Activated CD8-positive, alpha-beta T cell treated with anti-CD3 and anti-CD28 coated beads, Interleukin-2, amount 10 ng/mL, durations not matched to agents 7 days and 5 days (primary cell): ENCODE measurements at regions of chr6 and their contacts with region 1.

Region 1: DNA sequence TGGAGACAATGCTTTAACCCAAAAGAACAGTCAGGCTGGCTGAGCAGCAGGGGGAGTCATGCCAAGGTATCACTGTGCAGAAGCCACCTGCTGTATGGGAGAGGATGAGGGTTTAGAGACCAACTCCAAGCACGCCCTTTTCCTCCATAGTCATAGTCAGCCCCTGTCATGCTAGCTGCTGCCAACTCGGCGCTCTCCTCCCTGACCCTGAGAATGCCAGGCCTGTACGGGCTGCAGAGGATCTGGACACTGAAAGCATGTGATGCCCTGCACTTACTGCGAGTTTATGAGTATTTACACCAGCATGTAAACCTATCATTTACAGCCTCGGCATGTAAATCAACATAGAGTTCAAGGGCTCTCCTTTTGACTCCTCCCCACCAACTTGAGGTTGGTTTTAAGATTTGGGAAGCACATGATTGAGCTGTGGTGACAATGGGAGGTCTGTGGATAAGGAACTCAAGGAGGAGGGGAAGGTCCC is 11.7 kb upstream of the SCUBE3 start:
- DNase-seq: no peak
- ATAC-seq: no peak
- H3K4me3 Mint-ChIP-seq: no peak overlapping the region
- H3K27ac Mint-ChIP-seq: no peak overlapping the region
- H3K4me1 Mint-ChIP-seq: no peaks in the 10 kb centered on the region
- H3K27me3 Mint-ChIP-seq: peaks cover 43% of the 10 kb centered on the region

Region 2: GRCh38 chr6:34986845-34987246 is 215.3 kb before region 1 on chr6:
- CTCF ChIA-PET with region 1: interaction called, 53 read pairs
- POLR2A ChIA-PET with region 1: no interaction called
- DNase-seq: peak; percentile 77
- ATAC-seq: peak; percentile 55
- H3K4me3 Mint-ChIP-seq: no peak overlapping the region
- H3K27ac Mint-ChIP-seq: no peak overlapping the region
- H3K4me1 Mint-ChIP-seq: no peaks in the 10 kb centered on the region
- H3K27me3 Mint-ChIP-seq: no peaks in the 10 kb centered on the region

Region 3: GRCh38 chr6:35146453-35146852 is 55.7 kb before region 1 on chr6:
- CTCF ChIA-PET with region 1: interaction called, 77 read pairs
- POLR2A ChIA-PET with region 1: no interaction called
- DNase-seq: peak; percentile 48
- ATAC-seq: peak; percentile 44
- H3K4me3 Mint-ChIP-seq: no peak overlapping the region
- H3K27ac Mint-ChIP-seq: no peak overlapping the region
- H3K4me1 Mint-ChIP-seq: peaks cover 31% of the 10 kb centered on the region
- H3K27me3 Mint-ChIP-seq: peaks cover 14% of the 10 kb centered on the region

Region 4: DNA sequence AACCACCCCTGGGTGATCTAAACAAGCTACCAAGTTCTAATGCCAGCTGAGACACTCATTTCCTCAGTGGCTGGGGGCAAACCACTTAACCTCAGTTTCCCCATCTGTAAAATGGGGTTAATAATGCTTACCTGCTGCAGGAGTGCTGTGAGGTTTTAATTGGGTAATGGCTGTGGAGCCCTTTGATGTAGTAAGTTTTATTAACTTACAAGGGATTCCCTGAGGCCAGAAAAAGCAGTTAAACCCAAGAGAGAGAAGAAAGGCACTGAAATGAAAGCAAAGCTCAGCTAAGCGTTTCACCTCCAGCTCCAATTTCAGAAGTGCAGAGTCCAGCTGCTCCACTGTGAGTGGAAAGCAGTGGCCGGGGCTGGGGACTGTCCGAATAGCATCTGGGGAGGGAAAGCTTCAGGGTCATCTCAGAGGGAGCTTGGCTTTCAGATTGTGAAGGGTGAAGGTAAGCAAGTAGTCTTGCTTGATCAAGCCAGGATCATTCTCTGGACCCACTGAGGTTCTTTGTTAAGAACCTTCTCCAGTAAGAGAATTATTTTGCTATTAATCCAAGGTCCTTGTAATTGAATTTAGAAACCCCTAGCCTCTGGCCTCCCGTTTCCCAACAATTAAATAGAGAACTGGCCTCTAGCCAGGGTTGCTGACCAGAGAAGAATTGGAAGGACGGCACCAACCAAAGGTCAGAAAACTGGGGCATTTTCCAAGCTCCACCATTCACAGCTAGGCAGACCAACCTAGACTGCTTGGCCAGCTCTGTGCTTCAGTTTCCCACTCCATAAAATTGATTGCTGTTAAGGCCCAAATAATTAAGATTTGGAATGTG is 40.1 kb before region 1 on chr6:
- CTCF ChIA-PET with region 1: interaction called, 12 read pairs
- POLR2A ChIA-PET with region 1: no interaction called
- DNase-seq: no peak
- ATAC-seq: no peak
- H3K4me3 Mint-ChIP-seq: no peak overlapping the region
- H3K27ac Mint-ChIP-seq: no peak overlapping the region
- H3K4me1 Mint-ChIP-seq: no peaks in the 10 kb centered on the region
- H3K27me3 Mint-ChIP-seq: peaks cover 38% of the 10 kb centered on the region

Region 5: DNA sequence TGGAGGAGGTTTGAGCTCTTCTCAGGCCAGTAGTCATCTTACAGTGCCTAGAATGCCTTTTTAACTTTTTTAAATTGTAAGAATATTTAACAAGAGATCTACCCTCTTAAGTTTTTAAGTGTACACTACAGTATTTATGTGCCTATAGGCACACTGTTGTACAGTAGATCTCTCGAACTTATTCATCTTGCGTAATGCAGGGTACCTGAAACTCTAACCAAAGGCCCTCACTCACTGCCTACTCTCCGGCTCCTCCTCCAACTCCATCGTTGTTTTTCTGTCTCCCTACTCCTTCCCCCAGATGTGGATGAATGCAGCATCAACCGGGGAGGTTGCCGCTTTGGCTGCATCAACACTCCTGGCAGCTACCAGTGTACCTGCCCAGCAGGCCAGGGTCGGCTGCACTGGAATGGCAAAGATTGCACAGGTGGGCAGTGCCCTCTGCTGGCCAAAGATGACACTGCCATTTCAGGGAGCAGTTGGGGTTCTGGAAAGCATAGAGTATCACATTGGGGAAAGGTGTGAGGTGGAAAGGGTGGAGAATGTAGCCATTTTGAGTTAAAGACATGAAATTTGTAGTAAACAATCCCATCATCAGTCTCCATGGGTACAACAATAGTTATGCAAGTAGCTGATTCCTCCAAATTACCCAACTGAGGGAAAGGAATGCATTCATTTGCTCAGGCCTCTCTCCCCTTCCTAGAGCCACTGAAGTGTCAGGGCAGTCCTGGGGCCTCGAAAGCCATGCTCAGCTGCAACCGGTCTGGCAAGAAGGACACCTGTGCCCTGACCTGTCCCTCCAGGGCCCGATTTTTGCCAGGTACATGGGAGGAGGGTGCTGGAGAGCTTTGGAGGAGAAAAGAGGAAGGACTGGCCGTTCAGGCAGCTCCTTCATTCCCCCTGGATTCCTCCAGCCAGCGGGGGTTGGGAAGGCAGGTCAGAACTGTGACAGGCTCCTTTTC is 39.0 kb after region 1 on chr6:
- CTCF ChIA-PET with region 1: interaction called, 30 read pairs
- POLR2A ChIA-PET with region 1: no interaction called
- DNase-seq: peak; percentile 82
- ATAC-seq: peak; percentile 86
- H3K4me3 Mint-ChIP-seq: no peak overlapping the region
- H3K27ac Mint-ChIP-seq: no peak overlapping the region
- H3K4me1 Mint-ChIP-seq: peaks cover 3% of the 10 kb centered on the region
- H3K27me3 Mint-ChIP-seq: no peaks in the 10 kb centered on the region